ENCODE measurements at regions of chr7 and their contacts with region 1.

Region 1: GRCh38 chr7:132458729-132459128 is 117.5 kb downstream of the PLXNA4 start:
- DNase-seq: no peak
- H3K4me3 ChIP-seq: no peak overlapping the region
- H3K27ac ChIP-seq: no peak overlapping the region
- H3K4me1 ChIP-seq: no peaks in the 10 kb centered on the region
- H3K27me3 ChIP-seq: no peaks in the 10 kb centered on the region
- CTCF ChIP-seq: no peak
- POLR2A ChIP-seq: no peak

Region 2: DNA sequence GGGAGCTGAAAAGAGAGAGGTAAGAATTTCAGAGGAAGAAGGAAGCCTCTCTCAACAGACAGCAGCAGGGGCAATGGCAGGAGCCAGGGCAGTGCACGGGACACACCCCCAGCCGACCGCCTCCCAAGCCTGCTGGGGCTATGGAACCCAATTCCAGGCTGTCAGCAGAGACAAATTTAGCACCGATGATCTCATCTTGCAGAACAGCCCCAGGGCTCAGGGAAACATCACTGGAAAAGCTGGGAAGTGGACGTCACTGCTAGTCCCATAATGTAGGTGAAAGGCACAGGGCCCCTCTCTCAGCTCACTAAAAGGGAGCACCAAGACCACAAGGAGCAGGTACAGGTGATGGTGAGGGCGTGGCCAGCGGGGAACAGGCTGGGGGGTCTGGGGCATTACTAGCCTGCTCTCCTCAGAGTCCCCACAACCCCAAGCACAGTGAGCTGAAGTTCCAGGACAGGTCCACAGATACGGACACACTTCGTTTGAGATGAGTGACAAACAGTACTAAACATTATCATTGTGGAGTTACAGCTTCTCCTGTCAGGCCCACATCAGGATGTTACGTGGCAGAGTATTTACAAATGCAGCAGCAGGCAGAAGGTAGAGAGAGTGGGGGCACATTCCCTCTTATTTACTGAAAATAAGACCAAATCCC is 13.9 kb after region 1 on chr7:
- intact Hi-C with region 1: loop called (anchors 1 kb)
- DNase-seq: peak in 1 of 2 donors; percentile 22
- H3K4me3 ChIP-seq: no peak overlapping the region
- H3K27ac ChIP-seq: peak overlapping the region; percentile 6 to 84
- H3K4me1 ChIP-seq: no peaks in the 10 kb centered on the region
- H3K27me3 ChIP-seq: no peaks in the 10 kb centered on the region
- CTCF ChIP-seq: no peak
- POLR2A ChIP-seq: no peak

Region 3: GRCh38 chr7:132518102-132518838 is 59.5 kb after region 1 on chr7:
- intact Hi-C with region 1: no loop called
- DNase-seq: no peak
- H3K4me3 ChIP-seq: no peak overlapping the region
- H3K27ac ChIP-seq: no peak overlapping the region
- H3K4me1 ChIP-seq: no peaks in the 10 kb centered on the region
- H3K27me3 ChIP-seq: no peaks in the 10 kb centered on the region
- CTCF ChIP-seq: no peak
- POLR2A ChIP-seq: no peak